ENCODE measurements at regions of chr7 and their contacts with region 1.

Region 1: DNA sequence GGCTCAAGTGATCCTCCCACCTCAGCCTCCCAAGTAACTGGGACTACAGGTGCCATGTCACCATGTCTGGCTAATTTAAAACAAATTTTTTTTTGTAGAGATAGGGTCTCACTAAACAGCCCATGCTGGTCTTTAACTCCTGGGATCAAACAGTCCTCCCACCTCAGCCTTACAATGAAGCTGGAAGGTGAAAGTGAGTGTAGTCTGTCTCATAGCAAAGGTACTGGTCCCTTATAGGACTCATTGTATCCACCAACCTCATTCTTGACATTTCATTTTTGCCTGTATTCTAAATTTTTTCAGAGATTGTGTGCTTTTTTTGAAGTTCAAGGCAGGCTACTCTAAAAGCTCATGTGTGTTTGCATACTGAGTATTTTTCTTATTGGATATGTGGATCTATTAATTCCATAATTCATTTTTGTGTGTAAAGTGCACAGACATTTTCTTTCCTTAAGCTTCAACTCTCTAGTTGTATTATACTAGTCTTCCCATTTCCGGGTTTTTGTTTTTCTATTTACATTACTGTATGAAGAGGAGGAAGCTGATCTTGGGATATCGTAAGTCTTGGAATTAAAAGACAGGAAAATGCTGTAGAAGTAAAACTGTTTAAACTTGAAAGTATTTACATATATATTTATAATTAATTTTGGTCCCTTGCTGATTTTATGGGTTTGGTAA is 13.3 kb downstream of the KMT2E start:
- DNase-seq: no peak
- H3K4me3 ChIP-seq: no peak overlapping the region
- H3K4me3 Mint-ChIP-seq: no peak overlapping the region
- H3K27ac Mint-ChIP-seq: no peak overlapping the region
- H3K4me1 ChIP-seq: no peaks in the 10 kb centered on the region
- H3K4me1 Mint-ChIP-seq: peaks cover 13% of the 10 kb centered on the region
- H3K27me3 ChIP-seq: no peaks in the 10 kb centered on the region
- H3K27me3 Mint-ChIP-seq: no peaks in the 10 kb centered on the region
- CTCF ChIP-seq: no peak

Region 2: DNA sequence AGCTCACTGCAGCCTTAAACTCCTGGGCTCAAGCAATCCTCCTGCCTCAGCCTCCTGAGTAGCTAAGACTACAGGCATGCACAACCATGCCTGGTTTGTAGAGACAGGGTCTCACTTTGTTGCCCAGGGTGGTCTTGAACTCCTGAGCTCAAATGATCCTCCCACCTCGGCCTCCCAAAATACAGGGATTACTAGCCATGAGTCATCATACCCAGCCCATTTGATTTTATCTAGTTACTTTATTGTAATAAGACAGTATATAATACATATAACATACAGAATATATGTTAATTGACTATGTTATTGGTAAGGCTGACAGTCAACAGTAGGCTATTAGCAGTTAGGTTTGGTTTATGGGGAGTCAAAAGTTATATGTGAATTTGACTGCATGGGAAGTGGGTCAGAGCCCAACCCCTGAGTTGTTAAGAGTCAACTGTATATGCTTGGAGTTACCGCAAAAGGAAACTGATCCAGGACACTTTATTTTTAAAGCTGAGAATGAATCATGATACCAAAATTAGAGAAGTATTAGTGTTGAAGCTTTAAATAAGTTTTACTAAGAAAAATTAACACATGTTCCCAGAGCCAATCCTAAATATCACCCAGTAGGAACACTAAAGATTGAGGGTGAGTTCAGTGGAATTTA is 34.0 kb before region 1 on chr7:
- CTCF ChIA-PET with region 1: no interaction called
- POLR2A ChIA-PET with region 1: interaction called, 12 read pairs
- intact Hi-C with region 1: no loop called
- DNase-seq: no peak
- H3K4me3 ChIP-seq: no peak overlapping the region
- H3K4me3 Mint-ChIP-seq: no peak overlapping the region
- H3K27ac Mint-ChIP-seq: peak overlapping the region; percentile 32
- H3K4me1 ChIP-seq: peaks cover 50% of the 10 kb centered on the region
- H3K4me1 Mint-ChIP-seq: peaks cover 17% of the 10 kb centered on the region
- H3K27me3 ChIP-seq: no peaks in the 10 kb centered on the region
- H3K27me3 Mint-ChIP-seq: no peaks in the 10 kb centered on the region
- CTCF ChIP-seq: no peak